ENCODE measurements at regions of chr3 and their contacts with region 1.

Region 1: DNA sequence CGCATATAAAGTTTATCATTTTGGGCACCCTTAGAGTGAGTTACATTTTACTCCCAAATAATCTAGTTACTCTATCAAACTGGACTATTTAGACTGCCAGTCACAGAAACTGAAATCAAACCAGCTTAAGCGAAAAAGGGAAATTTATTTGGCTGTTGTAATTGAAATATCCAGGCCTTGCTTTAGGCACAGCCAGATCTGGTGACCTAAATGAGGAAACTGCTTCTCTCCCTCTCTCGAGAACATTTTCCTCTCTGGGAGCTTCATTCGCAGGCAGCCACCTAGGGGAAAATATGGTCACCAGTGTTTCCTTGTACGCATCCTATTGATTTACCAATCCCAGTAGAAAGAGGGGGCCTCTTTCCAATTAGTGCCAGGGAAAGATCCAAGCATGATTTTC is 175.3 kb upstream of the MITF start:
- DNase-seq: no peak
- ATAC-seq: peak in 1 of 2 donors; percentile 34
- H3K4me3 ChIP-seq: no peak overlapping the region
- H3K27ac ChIP-seq: no peak overlapping the region
- H3K4me1 ChIP-seq: peaks cover 5% of the 10 kb centered on the region
- H3K27me3 ChIP-seq: no peaks in the 10 kb centered on the region

Region 2: DNA sequence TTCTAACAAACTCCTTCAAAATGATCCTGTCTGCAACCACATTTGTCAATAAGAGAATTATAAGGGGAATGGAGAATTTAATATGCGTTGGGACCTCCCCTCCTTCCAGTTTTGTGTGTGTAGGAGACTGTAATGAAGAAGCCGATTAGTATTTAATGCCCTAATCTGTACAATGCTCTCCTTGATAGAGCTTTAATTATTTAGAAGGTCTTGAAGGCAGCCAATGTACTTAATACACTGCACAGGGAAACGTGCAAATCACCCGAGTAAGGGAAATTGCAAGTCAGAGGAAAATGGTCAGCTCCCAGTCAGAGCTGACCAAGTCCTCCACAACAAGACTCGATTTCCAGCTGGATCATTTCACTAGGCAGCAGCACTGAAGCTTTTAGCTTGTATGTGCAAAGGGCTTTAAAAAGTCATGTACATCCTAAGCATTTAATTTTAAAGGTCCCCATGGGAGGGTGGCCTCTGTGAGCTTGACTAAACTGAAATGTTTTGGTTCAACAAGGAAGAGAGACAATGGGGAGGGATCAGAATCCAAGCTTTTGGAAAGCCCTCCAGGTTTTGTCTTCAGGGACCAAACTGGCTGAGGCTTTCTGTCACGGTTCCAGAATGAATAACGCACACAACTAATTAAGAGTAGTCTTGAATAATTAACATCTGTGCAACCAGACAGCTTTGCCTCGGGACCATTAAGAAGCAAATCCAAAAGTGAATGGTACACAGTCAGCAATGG is 15.5 kb after region 1 on chr3:
- intact Hi-C with region 1: loop called in 1 of 4 experiments (anchors 2 kb)
- DNase-seq: no peak
- ATAC-seq: peak; percentile 23 to 59
- H3K4me3 ChIP-seq: no peak overlapping the region
- H3K27ac ChIP-seq: no peak overlapping the region
- H3K4me1 ChIP-seq: no peaks in the 10 kb centered on the region
- H3K27me3 ChIP-seq: no peaks in the 10 kb centered on the region